Dendritic cell treated with granulocyte-macrophage colony-stimulating factor and Interleukin-4, amounts not matched to agents 40 ng/mL and 50 ng/mL, for 4 days (primary cell): ENCODE measurements at regions of chr16 and their contacts with region 1.

Region 1: GRCh38 chr16:14449790-14450480 is 180.1 kb downstream of the PARN start:
- H3K4me3 Mint-ChIP-seq: no peak overlapping the region
- H3K27ac Mint-ChIP-seq: no peak overlapping the region
- H3K4me1 Mint-ChIP-seq: peaks cover 24% of the 10 kb centered on the region
- H3K27me3 Mint-ChIP-seq: no peaks in the 10 kb centered on the region

Region 2: DNA sequence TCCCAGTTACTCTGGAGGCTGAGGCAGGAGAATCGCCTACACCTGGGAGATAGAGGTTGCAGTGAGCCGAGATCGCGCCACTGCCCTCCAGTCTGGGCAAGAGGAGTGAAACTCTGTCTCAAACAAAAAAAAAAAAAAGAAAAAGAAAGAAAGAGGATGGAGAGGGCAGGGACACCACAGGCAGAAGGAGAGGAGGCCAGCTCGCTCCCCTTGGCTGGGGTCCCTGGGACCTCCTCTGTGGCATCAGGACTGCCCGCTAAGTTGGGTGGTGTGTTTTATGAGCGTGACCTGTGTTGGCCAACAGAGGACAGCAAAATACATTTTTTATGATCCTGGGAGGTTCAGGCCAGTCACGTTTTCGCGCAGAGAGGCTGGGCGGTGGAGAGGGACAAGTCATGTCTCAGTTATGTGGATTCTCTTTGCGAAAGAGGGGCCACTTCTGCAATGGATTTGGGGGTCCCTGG is 149.2 kb before region 1 on chr16:
- intact Hi-C with region 1: loop called (anchors 10 kb)
- H3K4me3 Mint-ChIP-seq: peak overlapping the region; percentile 86
- H3K27ac Mint-ChIP-seq: peak overlapping the region; percentile 88
- H3K4me1 Mint-ChIP-seq: peaks cover 52% of the 10 kb centered on the region
- H3K27me3 Mint-ChIP-seq: peaks cover 50% of the 10 kb centered on the region

Region 3: GRCh38 chr16:14611660-14612059 is 161.7 kb after region 1 on chr16:
- intact Hi-C with region 1: no loop called
- H3K4me3 Mint-ChIP-seq: no peak overlapping the region
- H3K27ac Mint-ChIP-seq: no peak overlapping the region
- H3K4me1 Mint-ChIP-seq: no peaks in the 10 kb centered on the region
- H3K27me3 Mint-ChIP-seq: no peaks in the 10 kb centered on the region